BJ (cell line): ENCODE measurements at regions of chr18 and their contacts with region 1.

Region 1: DNA sequence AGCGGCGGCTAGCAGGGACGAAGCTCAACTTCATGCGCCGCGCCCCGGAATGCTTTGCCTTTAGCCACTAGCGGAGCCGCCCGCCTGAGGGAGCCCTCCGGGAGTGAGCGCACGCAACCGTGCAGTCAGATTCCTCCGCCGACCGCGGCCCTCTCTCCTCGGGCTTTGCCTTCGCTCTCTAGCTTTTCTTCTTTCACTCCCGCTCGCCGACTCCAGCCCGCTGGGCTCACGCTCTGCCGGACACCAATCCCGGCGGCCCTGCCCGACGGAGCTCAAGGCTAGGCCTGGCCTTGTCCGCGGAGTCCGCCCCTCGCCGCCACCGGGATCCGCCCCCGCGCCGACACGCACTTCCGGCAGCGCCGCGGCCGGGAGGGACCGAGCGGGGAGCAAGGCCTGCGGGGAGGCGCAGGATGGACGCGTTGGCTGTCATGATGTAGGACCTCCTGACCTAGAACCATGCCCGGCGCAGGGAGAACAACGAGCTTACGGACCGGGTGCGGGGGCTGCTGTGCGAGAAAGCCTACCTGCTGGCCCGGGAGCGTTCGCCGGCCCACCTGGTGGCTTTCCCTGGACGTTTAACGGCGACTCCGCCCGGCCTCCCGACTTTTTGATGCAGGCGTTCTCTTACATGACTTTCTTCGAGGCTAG is 40.8 kb upstream of the AKAIN1 start:
- DNase-seq: peak; percentile 39
- H3K4me3 ChIP-seq: peak overlapping the region; percentile 86
- H3K27me3 ChIP-seq: no peaks in the 10 kb centered on the region
- CTCF ChIP-seq: peak; percentile 40; the same call in 1 of the 2 replicates

Region 2: DNA sequence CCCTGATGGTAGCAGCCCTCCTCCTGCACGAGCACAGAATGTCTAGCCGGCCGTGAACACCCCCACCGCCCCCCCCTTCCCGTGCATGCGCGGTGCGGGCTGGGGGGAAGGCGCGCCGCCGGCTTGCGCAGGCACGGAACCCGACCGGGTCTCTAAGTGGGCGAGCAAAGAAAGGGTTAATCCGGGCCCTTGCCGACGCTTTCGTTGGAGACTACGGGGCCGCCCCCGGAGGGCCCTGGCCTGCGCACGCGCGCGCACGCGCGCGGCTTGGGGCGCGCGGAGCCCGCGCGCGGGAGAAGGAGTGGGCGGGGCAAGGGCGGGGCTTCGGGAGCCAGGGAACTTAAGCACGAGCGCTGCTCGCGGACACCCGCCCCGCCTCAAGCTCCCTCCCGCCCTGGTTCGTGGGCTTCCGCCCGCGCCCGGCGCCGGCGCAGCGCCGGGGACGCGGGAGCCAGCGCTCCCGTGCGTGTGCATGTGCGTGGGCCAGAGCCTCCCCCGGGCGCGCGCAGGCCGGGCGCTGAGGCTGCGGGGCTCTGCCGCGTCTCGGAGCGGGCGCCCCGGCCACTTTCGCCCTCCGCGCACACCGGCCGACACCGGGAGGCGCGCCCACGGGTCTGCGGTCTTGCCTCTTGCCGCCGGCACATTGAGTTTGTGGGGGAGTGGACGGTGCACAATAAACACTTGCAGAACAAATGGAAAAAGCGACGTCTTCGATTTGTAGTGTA is 58.3 kb after region 1 on chr18:
- CTCF ChIA-PET with region 1: interaction called, 4 read pairs
- POLR2A ChIA-PET with region 1: interaction called, 10 read pairs
- DNase-seq: peak; percentile 87
- H3K4me3 ChIP-seq: peak overlapping the region; percentile 76
- H3K27me3 ChIP-seq: peaks cover 3% of the 10 kb centered on the region
- CTCF ChIP-seq: no peak

Region 3: GRCh38 chr18:5582076-5582475 is 344.2 kb after region 1 on chr18:
- CTCF ChIA-PET with region 1: no interaction called
- POLR2A ChIA-PET with region 1: no interaction called
- DNase-seq: no peak
- H3K4me3 ChIP-seq: no peak overlapping the region
- H3K27me3 ChIP-seq: no peaks in the 10 kb centered on the region
- CTCF ChIP-seq: no peak

Region 4: DNA sequence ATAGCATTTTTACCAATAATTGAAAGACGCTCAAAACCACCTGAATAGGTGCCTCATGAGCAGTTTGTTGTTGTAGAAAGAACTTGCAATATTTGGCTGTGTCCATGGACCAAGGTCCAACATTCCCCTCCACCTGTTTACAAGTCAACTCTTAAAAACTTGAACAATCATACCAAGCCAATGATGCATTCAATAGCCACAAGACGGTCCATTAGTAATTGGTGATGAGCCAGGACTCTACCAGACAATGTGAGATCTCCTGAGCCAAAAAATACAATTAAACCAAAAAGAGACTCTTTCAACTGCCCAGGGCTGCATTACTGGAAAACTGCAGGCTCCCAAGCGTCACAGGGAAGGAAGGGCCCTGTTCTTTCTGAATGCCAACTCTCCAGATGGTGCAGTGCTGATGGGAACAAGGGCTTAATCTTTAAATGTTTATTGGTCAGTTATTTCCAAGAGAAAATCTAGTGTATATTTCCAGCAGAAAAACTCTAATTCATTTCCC is 424.8 kb after region 1 on chr18:
- CTCF ChIA-PET with region 1: no interaction called
- POLR2A ChIA-PET with region 1: no interaction called
- DNase-seq: no peak
- H3K4me3 ChIP-seq: no peak overlapping the region
- H3K27me3 ChIP-seq: no peaks in the 10 kb centered on the region
- CTCF ChIP-seq: no peak